ENCODE measurements at regions of chrX and their contacts with region 1.

Region 1: GRCh38 chrX:19747652-19748610 is 139.5 kb downstream of the SH3KBP1 start:
- DNase-seq: peak; percentile 82
- ATAC-seq: peak; percentile 78
- H3K4me3 Mint-ChIP-seq: peak overlapping the region; percentile 57
- H3K27ac Mint-ChIP-seq: peak overlapping the region; percentile 95
- H3K4me1 Mint-ChIP-seq: peaks cover 91% of the 10 kb centered on the region
- H3K27me3 Mint-ChIP-seq: no peaks in the 10 kb centered on the region

Region 2: GRCh38 chrX:19554786-19555185 is 193.1 kb before region 1 on chrX:
- CTCF ChIA-PET with region 1: no interaction called
- POLR2A ChIA-PET with region 1: interaction called, 3 read pairs
- intact Hi-C with region 1: loop called in 1 of 2 experiments (anchors 5 kb)
- DNase-seq: peak; percentile 59
- ATAC-seq: peak; percentile 72
- H3K4me3 Mint-ChIP-seq: no peak overlapping the region
- H3K27ac Mint-ChIP-seq: peak overlapping the region; percentile 79
- H3K4me1 Mint-ChIP-seq: peaks cover 54% of the 10 kb centered on the region
- H3K27me3 Mint-ChIP-seq: no peaks in the 10 kb centered on the region

Region 3: GRCh38 chrX:19769467-19769866 is 21.5 kb after region 1 on chrX:
- CTCF ChIA-PET with region 1: interaction called, 5 read pairs
- POLR2A ChIA-PET with region 1: interaction called, 7 read pairs
- intact Hi-C with region 1: loop called in 1 of 2 experiments (anchors 2 kb)
- DNase-seq: no peak
- ATAC-seq: peak; percentile 39
- H3K4me3 Mint-ChIP-seq: no peak overlapping the region
- H3K27ac Mint-ChIP-seq: peak overlapping the region; percentile 82
- H3K4me1 Mint-ChIP-seq: peaks cover 68% of the 10 kb centered on the region
- H3K27me3 Mint-ChIP-seq: no peaks in the 10 kb centered on the region

Region 4: DNA sequence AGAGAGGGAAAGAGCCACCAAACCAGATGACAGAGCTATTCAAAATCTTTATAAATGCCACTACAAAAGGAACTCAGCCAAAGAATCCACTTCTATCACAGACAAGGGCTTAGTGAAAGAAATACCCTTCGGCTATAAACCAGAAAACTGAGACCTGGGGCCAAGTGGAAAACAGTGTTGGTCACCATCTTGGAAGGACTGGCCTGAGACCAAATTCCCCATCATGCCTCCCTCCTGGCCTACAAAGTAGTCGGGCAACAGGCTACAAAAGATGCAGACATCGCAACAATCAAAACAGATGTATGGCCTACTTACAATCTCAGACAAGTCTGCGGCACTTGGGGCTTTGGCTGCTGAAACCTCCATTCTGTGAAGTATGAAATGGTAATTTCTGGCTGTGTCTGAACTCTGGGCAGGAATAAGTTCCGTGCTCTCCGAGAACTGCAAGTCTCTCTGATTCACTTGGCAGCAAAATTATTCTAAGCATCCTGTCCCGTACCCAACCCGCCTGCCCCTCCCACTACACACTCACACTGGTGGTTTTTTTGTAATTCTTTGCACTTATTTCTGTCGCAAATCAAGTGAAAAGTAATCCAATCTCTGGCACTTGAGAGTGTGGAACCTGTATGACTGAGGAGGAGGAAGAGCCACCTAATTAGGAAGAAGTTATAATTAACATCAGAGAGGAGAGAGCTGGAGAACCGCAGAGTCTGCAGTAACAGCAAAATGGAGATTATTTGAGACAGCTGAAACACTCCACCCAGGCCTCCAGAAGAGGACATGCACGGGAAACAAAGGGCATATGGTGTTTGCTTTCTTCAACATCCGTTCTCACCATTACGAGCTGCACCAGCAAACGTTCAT is 51.6 kb after region 1 on chrX:
- CTCF ChIA-PET with region 1: interaction called, 4 read pairs
- POLR2A ChIA-PET with region 1: interaction called, 3 read pairs
- intact Hi-C with region 1: loop called (anchors 1 to 2 kb)
- DNase-seq: peak; percentile 65
- ATAC-seq: peak; percentile 78
- H3K4me3 Mint-ChIP-seq: peak overlapping the region; percentile 84
- H3K27ac Mint-ChIP-seq: peak overlapping the region; percentile 98
- H3K4me1 Mint-ChIP-seq: peaks cover 66% of the 10 kb centered on the region
- H3K27me3 Mint-ChIP-seq: no peaks in the 10 kb centered on the region

Region 5: DNA sequence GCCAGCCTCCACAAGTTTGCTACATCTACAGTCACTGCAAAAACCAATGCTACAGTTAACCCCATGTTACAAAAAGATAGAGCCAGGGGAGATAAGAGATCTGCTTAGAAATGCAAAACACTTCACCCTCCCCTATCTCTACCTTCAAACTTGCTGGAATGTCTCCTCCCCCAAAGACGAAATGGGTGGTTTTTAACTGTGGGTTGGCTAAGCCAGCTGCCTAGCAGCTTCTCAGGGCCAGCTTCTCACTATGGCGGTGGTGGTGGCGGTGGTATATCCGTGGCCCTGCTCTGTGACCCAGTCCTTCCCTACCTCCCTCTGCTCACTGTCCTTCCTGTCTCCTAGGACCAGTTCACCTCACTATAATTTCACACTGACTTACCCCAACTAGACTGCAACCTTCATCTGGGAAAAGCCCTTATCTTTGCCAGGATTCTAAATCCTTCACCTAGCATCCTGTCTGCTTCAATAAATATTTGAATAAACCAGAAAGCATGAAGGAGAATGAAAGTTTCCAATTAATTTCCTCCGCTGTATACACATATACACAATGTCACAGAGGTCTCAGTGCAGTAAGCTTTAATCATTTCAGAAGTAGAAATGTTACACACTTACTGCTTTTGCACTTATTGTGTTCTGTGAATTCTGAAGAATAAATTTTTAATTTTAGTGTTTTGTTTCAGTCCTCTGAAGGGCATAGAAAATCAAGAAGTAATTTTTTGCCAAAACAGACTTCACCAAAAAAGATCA is 93.1 kb after region 1 on chrX:
- CTCF ChIA-PET with region 1: interaction called, 4 read pairs
- POLR2A ChIA-PET with region 1: interaction called, 6 read pairs
- intact Hi-C with region 1: loop called (anchors 5 kb)
- DNase-seq: peak; percentile 63
- ATAC-seq: peak; percentile 69
- H3K4me3 Mint-ChIP-seq: peak overlapping the region; percentile 55
- H3K27ac Mint-ChIP-seq: peak overlapping the region; percentile 97
- H3K4me1 Mint-ChIP-seq: peaks cover 84% of the 10 kb centered on the region
- H3K27me3 Mint-ChIP-seq: no peaks in the 10 kb centered on the region